ENCODE measurements at regions of chr15 and their contacts with region 1.

Region 1: GRCh38 chr15:72375847-72376581 is at the start of gene HEXA:
- DNase-seq: peak; percentile 94
- H3K4me3 Mint-ChIP-seq: peak within 1 kb of the TSS; percentile 89
- H3K27ac Mint-ChIP-seq: peak within 1 kb of the TSS; percentile 93
- H3K4me1 Mint-ChIP-seq: peaks cover 31% of the 10 kb centered on the region
- H3K27me3 Mint-ChIP-seq: peaks cover 4% of the 10 kb centered on the region
- total RNA-seq, gene HEXA: 55.7 and 61.0 TPM in 2 replicates

Region 2: GRCh38 chr15:72231066-72231846 is 144.8 kb before region 1 on chr15 and contains the start of gene PKM:
- intact Hi-C with region 1: loop called (anchors 2 kb)
- DNase-seq: peak; percentile 95
- H3K4me3 Mint-ChIP-seq: peak within 1 kb of the TSS; percentile 98
- H3K27ac Mint-ChIP-seq: peak within 1 kb of the TSS; percentile 100
- H3K4me1 Mint-ChIP-seq: peaks cover 40% of the 10 kb centered on the region
- H3K27me3 Mint-ChIP-seq: no peaks in the 10 kb centered on the region
- total RNA-seq, gene PKM: 2,409 and 2,442 TPM in 2 replicates

Region 3: DNA sequence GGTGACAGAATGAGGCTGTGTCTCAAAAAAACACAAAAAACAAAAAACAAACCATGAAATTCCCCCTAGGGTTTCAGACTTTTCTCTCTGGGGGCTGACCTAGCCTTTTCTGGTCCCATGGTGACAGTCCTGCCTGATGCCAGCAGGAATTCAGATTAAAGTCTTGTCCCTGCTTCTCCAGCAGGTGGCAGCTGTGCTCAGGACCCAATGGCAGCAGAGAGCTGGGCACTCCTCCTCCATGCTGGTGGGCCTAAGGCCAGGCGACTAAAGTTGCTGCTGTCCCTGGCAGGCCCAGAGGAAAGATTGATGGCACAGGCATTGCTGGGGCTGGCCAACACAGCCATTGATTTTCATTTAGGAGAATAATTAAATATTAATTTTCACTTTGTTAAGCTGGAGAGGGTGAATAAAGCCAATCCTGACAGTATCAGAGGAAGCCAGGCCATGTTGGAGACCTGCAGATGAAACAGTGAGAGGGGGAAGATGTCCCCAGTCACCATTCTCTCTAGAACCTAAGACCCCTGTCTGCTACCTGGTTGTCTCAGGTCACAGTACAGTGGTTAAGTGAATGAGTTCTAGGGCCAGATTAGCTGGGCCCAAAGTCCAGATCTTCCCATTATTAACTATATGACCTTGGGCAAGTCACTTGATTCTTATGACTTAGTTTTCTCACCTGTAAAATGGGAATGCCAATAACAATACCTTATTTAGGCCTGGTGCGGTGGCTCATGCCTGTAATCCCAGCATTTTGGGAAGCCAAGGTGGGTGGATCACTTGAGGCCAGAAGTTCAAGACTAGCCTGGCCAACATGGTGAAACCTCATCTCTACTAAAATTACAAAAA is 63.2 kb before region 1 on chr15:
- intact Hi-C with region 1: loop called (anchors 5 kb)
- DNase-seq: peak; percentile 46
- H3K4me3 Mint-ChIP-seq: no peak overlapping the region
- H3K27ac Mint-ChIP-seq: no peak overlapping the region
- H3K4me1 Mint-ChIP-seq: no peaks in the 10 kb centered on the region
- H3K27me3 Mint-ChIP-seq: peaks cover 6% of the 10 kb centered on the region

Region 4: GRCh38 chr15:72521682-72522081 is 145.7 kb after region 1 on chr15:
- intact Hi-C with region 1: no loop called
- DNase-seq: no peak
- H3K4me3 Mint-ChIP-seq: no peak overlapping the region
- H3K27ac Mint-ChIP-seq: no peak overlapping the region
- H3K4me1 Mint-ChIP-seq: peaks cover 10% of the 10 kb centered on the region
- H3K27me3 Mint-ChIP-seq: no peaks in the 10 kb centered on the region

Region 5: DNA sequence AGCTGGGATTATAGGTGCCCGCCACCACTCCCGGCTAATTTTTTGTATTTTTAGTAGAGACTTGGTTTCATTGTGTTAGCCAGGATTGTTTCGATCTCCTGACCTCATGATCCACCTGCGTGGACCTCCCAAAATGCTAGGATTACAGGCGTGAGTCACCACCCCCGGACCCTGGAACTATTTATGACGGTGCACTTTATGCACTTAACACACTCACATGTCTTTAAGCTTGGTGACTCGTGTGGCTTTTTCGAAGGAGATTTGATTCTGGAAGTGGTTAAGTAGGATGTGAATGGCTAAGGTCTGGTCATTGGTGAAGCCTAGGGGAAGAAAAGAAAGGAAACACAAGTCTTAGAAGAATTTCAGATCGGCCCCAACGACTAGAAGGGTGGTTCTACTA is 330.3 kb after region 1 on chr15:
- intact Hi-C with region 1: no loop called
- DNase-seq: no peak
- H3K4me3 Mint-ChIP-seq: no peak overlapping the region
- H3K27ac Mint-ChIP-seq: no peak overlapping the region
- H3K4me1 Mint-ChIP-seq: no peaks in the 10 kb centered on the region
- H3K27me3 Mint-ChIP-seq: no peaks in the 10 kb centered on the region

Region 6: GRCh38 chr15:74007820-74008371 is 1631.9 kb after region 1 on chr15:
- intact Hi-C with region 1: loop called (anchors 2 kb)
- DNase-seq: peak; percentile 30
- H3K4me3 Mint-ChIP-seq: peak overlapping the region; percentile 79
- H3K27ac Mint-ChIP-seq: peak overlapping the region; percentile 96
- H3K4me1 Mint-ChIP-seq: peaks cover 75% of the 10 kb centered on the region
- H3K27me3 Mint-ChIP-seq: no peaks in the 10 kb centered on the region

Measured in activated T-helper 1 cell treated with anti-CD3 and anti-CD28 coated beads, Interleukin-12 subunit alpha, Interleukin-12 subunit beta, Interleukin-2, Interleukin-4 antibody, amounts not matched to agents 30 ng/mL and 10 ng/mL and 1 ng/mL, durations not matched to agents 14 hours and 24 hours and 36 hours (primary cell).